Activated CD4-positive, alpha-beta T cell treated with anti-CD3 and anti-CD28 coated beads, Interleukin-2, amount 10 ng/mL, durations not matched to agents 7 days and 5 days (primary cell): ENCODE measurements at regions of chr11 and their contacts with region 1.

Region 1: DNA sequence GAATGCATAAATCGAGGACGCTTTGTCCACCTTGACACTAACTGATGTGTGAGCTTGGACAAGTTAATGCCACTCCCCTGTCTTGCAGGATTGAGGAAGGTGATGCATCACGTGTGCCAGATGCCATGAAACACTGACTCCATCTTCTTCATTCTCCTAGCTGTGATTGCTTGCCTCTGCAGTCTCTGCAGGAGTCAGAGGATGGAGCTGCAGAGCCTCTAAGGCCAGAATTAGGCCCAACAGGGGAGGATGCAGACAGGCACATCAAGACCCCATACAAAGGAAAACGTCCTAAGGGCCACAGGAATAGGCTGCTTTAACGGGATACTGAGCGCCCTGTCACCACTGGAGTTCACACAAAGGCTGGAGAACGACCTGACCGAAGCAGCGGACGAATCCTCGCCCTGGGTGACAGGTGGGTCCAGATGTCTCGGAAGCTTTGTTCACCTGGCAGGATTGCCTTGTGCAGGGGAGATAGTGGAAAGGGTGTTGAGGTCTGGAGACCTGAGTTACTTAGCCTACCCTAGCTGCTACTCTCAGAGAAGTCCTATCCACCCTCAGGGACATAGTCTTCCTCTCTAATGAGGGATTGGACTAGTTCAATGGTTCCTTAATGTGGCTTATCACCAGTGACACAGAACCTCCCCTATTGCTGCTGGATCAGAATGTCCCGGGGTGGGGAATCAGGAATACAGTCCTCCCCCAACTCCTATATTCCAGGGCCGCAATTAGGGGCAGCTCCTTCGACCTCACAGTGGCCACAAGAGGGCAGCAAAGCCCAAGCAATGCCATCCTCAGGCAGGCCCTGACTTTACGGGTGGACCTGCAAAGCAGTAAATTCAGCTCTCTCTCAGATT is 32.4 kb downstream of the DBX1 start:
- DNase-seq: peak; percentile 80
- H3K4me3 Mint-ChIP-seq: no peak overlapping the region
- H3K27ac Mint-ChIP-seq: no peak overlapping the region
- H3K4me1 Mint-ChIP-seq: peaks cover 10% of the 10 kb centered on the region
- H3K27me3 Mint-ChIP-seq: peaks cover 19% of the 10 kb centered on the region

Region 2: DNA sequence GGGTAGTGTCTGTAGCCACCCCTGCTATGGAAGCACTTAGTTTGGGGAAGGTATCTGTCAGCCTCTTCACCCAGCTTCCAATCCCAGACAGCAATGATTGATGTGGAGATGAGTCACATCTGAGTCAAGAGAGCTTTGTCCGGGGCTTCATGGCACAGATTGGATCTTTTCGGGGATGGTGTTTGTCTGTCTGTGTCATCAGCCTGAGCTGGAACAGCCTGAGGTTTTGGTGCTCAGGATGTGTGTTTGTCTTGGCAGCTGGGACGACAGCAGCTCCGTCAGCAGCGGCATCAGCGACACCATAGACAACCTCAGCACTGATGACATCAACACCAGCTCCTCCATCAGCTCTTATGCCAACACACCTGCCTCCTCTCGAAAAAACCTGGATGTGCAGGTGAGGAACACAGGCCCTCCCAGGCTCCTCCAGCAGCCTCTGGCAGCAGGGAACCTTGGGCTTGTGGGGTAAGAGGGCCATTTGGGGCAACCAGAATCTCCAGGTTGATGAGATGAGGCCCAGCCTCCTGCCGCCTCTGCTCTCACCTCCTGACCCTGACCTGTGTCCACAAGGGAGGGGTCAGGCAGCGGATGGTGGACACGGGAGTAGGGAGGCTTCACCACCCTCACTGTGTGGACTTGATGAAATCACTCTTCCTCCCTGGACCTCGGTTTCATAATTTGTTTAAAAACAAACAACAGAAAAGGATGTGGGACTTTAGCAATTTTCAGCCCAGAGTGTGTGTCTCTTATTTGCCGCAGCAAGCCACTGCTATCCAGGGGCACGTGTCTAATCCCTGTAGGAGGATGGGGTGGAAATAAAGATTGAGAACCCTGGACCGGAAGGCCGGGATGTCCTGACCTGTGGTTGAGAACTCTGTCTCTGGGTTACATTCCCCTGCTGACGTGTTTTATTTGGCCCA is 91.9 kb before region 1 on chr11:
- CTCF ChIA-PET with region 1: no interaction called
- POLR2A ChIA-PET with region 1: no interaction called
- DNase-seq: no peak
- H3K4me3 Mint-ChIP-seq: no peak overlapping the region
- H3K27ac Mint-ChIP-seq: no peak overlapping the region
- H3K4me1 Mint-ChIP-seq: no peaks in the 10 kb centered on the region
- H3K27me3 Mint-ChIP-seq: peaks cover 15% of the 10 kb centered on the region

Region 3: GRCh38 chr11:20089796-20090653 is 37.9 kb before region 1 on chr11:
- CTCF ChIA-PET with region 1: no interaction called
- POLR2A ChIA-PET with region 1: no interaction called
- DNase-seq: no peak
- H3K4me3 Mint-ChIP-seq: no peak overlapping the region
- H3K27ac Mint-ChIP-seq: no peak overlapping the region
- H3K4me1 Mint-ChIP-seq: peaks cover 16% of the 10 kb centered on the region
- H3K27me3 Mint-ChIP-seq: peaks cover 23% of the 10 kb centered on the region

Region 4: DNA sequence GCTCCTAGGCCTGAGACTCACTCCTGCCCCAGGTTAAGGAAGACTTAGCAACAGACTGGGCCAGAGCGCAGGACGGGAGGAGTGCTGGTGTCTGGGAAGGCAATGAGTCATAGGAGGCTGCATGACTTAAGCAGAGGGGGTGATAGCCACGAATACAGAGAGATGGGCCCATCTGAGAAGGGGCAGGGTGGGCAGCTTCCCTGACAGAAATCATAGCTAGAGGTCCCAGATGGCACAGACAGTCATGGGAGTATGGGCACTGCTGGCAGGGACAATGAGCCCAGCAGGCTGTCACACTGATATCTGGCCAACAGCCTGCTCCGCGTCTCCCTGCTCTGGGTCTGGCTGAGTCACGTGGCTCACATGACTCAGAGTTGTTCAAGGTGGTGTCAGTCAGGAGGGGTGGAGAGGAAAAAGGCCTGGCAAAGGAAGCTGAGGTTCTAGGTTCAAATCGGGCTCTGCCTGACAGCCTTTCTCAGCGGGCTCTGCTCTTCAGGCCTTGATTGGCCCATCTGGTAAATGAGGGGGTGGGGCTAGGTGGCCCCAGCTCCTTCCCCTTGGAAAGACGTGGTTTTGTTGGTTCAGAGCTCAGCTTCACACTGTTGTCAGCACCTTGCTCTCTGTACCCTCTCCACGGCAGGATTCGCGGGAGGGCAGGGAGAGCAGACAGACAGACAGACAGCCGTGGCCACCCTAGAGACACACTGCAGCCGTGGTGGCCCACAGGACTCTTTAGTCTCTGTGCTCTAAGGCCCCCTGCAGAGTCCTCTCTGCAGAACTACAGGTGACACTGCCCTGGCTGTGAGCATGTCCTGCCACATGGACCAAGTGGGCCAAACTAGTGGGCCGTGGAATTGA is 15.4 kb before region 1 on chr11:
- CTCF ChIA-PET with region 1: interaction called, 12 read pairs
- POLR2A ChIA-PET with region 1: no interaction called
- DNase-seq: no peak
- H3K4me3 Mint-ChIP-seq: no peak overlapping the region
- H3K27ac Mint-ChIP-seq: no peak overlapping the region
- H3K4me1 Mint-ChIP-seq: peaks cover 4% of the 10 kb centered on the region
- H3K27me3 Mint-ChIP-seq: no peaks in the 10 kb centered on the region